Thyroid gland (tissue), 4 donors: ENCODE measurements at regions of chr1 and their contacts with region 1.

Region 1: GRCh38 chr1:24635195-24635843 is 7.8 kb upstream of the SRRM1 start:
- DNase-seq: no peak
- H3K4me3 ChIP-seq: no peak overlapping the region
- H3K27ac ChIP-seq: no peak overlapping the region
- H3K4me1 ChIP-seq: no peaks in the 10 kb centered on the region
- H3K27me3 ChIP-seq: no peaks in the 10 kb centered on the region
- CTCF ChIP-seq: peak in 5 of 6 experiments; percentile 33 to 74 (median 57)
- POLR2A ChIP-seq: no peak

Region 2: GRCh38 chr1:24201941-24202440 is 433.3 kb before region 1 on chr1:
- intact Hi-C with region 1: loop called (anchors 10 kb)
- DNase-seq: peak; percentile 88 to 89
- H3K4me3 ChIP-seq: no peak overlapping the region
- H3K27ac ChIP-seq: peak overlapping the region in 2 of 3 donors; percentile 38 to 51
- H3K4me1 ChIP-seq: peaks cover 0 to 19% of the 10 kb centered on the region in 2 donors
- H3K27me3 ChIP-seq: no peaks in the 10 kb centered on the region
- CTCF ChIP-seq: peak; percentile 57 to 93 (median 84)
- POLR2A ChIP-seq: no peak

Region 3: DNA sequence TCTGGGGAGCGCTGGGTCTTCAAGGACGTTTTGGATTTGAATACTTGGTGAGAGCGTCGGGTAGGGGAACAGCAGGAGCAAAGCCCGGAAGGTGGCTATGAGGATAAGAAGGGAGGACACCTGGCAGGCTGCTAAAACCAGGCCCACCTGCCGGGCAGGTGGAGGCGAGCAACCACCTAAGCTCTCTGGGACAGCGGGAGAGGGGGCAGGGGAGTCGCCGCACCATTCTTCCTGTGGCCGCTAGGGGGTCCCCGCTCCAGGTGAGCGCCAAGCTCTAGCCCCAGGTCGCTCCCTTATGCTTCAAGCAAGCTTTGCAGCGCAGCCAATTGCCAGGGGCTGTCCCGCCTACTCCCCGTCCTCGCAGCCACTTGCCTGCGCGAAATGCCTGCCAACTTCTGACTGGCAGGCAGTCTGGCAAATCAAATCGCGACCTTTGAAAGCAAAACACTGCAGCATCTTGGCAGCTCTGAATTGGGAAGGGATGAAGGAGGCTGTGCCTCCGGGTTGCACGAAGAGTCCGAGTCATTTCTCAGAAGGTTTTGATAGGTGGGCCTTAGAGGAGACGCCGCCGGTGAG is 219.9 kb before region 1 on chr1 and contains the start of gene NIPAL3:
- intact Hi-C with region 1: loop called (anchors 10 kb)
- DNase-seq: peak; percentile 99
- H3K4me3 ChIP-seq: peak within 1 kb of the TSS; percentile 40 to 55 (median 47)
- H3K27ac ChIP-seq: peak within 1 kb of the TSS; percentile 52 to 81 (median 69)
- H3K4me1 ChIP-seq: peaks cover 30 to 43% of the 10 kb centered on the region in 2 donors
- H3K27me3 ChIP-seq: no peaks in the 10 kb centered on the region
- CTCF ChIP-seq: peak; percentile 85 to 98 (median 94)
- POLR2A ChIP-seq: peak in 1 of 2 donors; percentile 73
- total RNA-seq, gene NIPAL3: 71.2 to 145 (median 121) TPM

Region 4: GRCh38 chr1:24558902-24559791 is 76.2 kb before region 1 on chr1:
- intact Hi-C with region 1: loop called (anchors 10 kb)
- DNase-seq: peak; percentile 86
- H3K4me3 ChIP-seq: no peak overlapping the region
- H3K27ac ChIP-seq: peak overlapping the region in 1 of 3 donors; percentile 28
- H3K4me1 ChIP-seq: peaks cover 15 to 57% of the 10 kb centered on the region in 2 donors
- H3K27me3 ChIP-seq: no peaks in the 10 kb centered on the region
- CTCF ChIP-seq: no peak
- POLR2A ChIP-seq: no peak